ENCODE measurements at regions of chrX and their contacts with region 1.

Region 1: DNA sequence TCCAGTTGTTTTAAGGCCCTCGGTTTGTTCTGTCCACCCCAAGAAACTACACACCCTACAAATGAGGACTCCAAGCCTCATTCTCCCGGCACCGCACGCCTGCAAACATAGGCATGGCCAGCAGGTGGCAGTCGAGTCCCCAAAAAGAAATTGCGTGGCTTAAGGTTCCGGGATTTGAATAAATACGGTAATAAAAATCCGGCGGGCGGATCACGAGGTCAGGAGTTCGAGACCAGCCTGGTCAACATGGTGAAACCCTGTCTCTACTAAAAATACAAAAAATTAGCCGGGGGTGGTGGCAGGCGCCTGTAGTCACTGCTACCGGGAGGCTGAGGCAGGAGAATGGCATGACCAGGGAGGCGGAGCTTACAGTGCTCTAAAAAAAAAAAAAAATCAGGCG is 21.8 kb upstream of the CSF2RA start:
- DNase-seq: peak; percentile 91
- ATAC-seq: peak; percentile 33
- H3K4me3 Mint-ChIP-seq: no peak overlapping the region
- H3K27ac Mint-ChIP-seq: no peak overlapping the region
- H3K4me1 Mint-ChIP-seq: peaks cover 36% of the 10 kb centered on the region
- H3K27me3 Mint-ChIP-seq: no peaks in the 10 kb centered on the region

Region 2: DNA sequence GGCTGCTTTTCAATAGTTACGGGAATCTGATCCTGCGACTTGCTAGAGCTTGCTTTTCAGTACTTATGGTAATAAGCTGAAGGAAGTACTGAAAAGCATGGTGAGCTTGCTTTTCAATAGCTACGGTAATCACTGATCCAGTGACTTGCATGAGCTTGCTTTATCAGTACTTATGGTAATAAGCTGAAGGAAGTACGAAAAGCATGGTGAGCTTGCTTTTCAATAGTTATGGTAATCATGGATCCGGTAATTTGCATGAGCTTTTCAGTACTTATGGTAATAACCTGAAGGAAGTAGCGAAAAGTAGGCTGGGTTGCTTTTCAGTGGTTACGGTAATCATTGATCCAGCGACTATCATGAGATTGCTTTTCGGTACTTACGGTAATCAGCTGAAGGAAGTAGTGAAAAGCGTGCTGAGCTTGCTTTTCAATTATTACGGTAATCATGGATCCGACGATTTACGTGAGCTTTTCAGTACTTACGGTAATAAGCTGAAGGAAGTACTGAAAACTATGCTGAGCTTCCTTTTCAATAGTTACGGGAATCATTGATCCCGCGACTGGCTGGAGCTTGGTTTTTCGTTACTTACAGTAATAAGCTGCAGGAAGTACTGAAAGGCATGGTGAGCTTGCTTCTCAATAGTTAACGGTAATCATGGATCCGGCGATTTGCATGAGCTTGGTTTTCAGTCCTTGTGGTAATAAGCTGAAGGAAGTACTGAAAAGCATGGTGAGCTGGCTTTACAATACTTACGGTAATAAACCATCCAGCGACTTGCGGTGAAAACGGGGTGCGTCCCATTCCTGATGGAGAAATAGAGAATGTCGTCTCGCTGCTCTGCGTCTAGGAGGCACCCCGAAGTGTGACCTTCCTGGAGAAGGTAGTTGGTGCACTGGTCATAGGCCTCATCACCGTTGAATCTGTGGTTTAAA is 40.9 kb before region 1 on chrX:
- CTCF ChIA-PET with region 1: no interaction called
- POLR2A ChIA-PET with region 1: no interaction called
- intact Hi-C with region 1: loop called (anchors 1 kb)
- DNase-seq: peak; percentile 46
- ATAC-seq: peak; percentile 53
- H3K4me3 Mint-ChIP-seq: peak overlapping the region; percentile 67
- H3K27ac Mint-ChIP-seq: peak overlapping the region; percentile 42
- H3K4me1 Mint-ChIP-seq: peaks cover 29% of the 10 kb centered on the region
- H3K27me3 Mint-ChIP-seq: peaks cover 4% of the 10 kb centered on the region

Region 3: GRCh38 chrX:1411291-1411720 is 164.5 kb after region 1 on chrX:
- CTCF ChIA-PET with region 1: no interaction called
- POLR2A ChIA-PET with region 1: no interaction called
- intact Hi-C with region 1: no loop called
- DNase-seq: no peak
- ATAC-seq: no peak
- H3K4me3 Mint-ChIP-seq: no peak overlapping the region
- H3K27ac Mint-ChIP-seq: no peak overlapping the region
- H3K4me1 Mint-ChIP-seq: no peaks in the 10 kb centered on the region
- H3K27me3 Mint-ChIP-seq: no peaks in the 10 kb centered on the region

Region 4: GRCh38 chrX:1580735-1581531 is 334.1 kb after region 1 on chrX:
- CTCF ChIA-PET with region 1: no interaction called
- POLR2A ChIA-PET with region 1: no interaction called
- intact Hi-C with region 1: loop called in 1 of 2 experiments (anchors 5 kb)
- DNase-seq: peak; percentile 90
- ATAC-seq: peak; percentile 78
- H3K4me3 Mint-ChIP-seq: no peak overlapping the region
- H3K27ac Mint-ChIP-seq: no peak overlapping the region
- H3K4me1 Mint-ChIP-seq: peaks cover 19% of the 10 kb centered on the region
- H3K27me3 Mint-ChIP-seq: no peaks in the 10 kb centered on the region

Region 5: DNA sequence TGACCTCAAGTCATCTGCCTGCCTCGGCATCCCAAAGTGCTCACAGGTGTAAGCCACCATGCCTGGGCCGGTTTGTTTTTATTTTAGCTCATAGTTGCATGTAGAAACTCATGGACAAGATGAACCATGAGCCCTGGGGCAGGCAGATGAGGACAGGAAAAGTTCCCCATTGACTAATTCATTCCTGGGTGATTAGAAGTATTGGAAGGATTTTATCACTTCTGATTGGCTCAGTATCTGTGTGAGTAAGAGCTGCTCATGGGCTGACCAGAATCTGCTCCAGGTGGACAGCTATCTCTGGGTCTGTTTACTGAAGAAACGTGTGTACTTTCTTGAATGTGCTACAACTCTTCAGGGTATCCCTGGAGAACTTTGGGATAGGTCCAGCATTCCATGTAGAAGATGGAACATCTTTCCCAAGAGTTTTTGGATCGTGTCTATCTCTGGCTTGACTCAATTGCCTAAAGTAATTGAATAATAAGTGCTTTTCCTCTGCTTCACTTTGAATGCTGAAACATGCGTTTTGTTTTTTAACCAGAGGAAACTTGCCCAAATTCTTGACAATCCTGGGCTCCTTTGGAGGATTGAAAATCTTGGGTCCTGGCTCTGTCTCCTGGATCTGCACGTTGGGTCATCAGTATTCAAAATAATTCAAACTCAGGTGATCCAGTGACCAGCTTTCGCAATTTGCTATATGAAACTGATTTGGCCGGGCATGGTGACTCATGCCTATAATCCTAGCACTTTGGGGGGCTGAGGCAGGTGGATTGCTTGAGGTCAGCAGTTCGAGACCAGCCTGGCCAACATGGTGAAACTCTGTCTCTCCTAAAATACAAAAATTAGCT is 1342.6 kb after region 1 on chrX:
- CTCF ChIA-PET with region 1: no interaction called
- POLR2A ChIA-PET with region 1: no interaction called
- intact Hi-C with region 1: loop called in 1 of 2 experiments (anchors 5 kb)
- DNase-seq: no peak
- ATAC-seq: no peak
- H3K4me3 Mint-ChIP-seq: no peak overlapping the region
- H3K27ac Mint-ChIP-seq: no peak overlapping the region
- H3K4me1 Mint-ChIP-seq: peaks cover 2% of the 10 kb centered on the region
- H3K27me3 Mint-ChIP-seq: peaks cover 3% of the 10 kb centered on the region